ENCODE measurements at regions of chr11 and their contacts with region 1.

Region 1: GRCh38 chr11:94897330-94897768 is 76.0 kb downstream of the CWC15 start:
- DNase-seq: no peak
- H3K4me3 ChIP-seq: no peak overlapping the region
- H3K27ac ChIP-seq: no peak overlapping the region
- H3K4me1 ChIP-seq: no peaks in the 10 kb centered on the region
- H3K27me3 ChIP-seq: no peaks in the 10 kb centered on the region
- CTCF ChIP-seq: peak; percentile 69 to 89 (median 82)
- POLR2A ChIP-seq: no peak

Region 2: GRCh38 chr11:94623120-94623735 is 274.1 kb before region 1 on chr11:
- intact Hi-C with region 1: loop called (anchors 5 kb)
- DNase-seq: no peak
- H3K4me3 ChIP-seq: no peak overlapping the region
- H3K27ac ChIP-seq: no peak overlapping the region
- H3K4me1 ChIP-seq: no peaks in the 10 kb centered on the region
- H3K27me3 ChIP-seq: no peaks in the 10 kb centered on the region
- CTCF ChIP-seq: peak; percentile 80 to 86 (median 82)
- POLR2A ChIP-seq: no peak

Region 3: DNA sequence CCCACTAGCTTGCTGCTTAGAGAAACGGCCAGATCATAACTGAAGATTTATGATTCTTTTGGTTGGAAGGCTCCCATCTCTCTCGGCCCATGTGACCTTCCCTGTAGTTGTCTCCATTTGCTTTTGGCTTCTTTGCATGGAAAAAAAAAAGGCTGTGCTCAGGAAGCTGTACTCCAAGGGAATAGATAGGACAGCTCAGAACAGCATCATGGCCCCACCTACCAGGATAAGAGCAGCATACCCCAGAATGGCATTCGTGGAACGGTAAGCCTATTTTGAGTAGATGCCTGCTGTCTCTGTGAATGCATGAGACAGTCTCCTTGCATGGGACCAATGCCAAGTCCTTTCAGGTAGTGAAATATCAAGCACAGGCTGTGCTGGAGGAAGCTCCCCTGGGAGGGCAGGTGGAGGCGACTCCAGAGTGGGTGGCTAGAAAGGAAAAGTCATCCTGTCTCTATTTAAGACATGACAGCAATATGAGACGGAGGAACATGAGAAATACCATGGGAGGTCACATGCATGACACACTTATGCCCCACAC is 223.3 kb before region 1 on chr11:
- intact Hi-C with region 1: no loop called
- DNase-seq: peak in 1 of 2 donors; percentile 62
- H3K4me3 ChIP-seq: no peak overlapping the region
- H3K27ac ChIP-seq: no peak overlapping the region
- H3K4me1 ChIP-seq: no peaks in the 10 kb centered on the region
- H3K27me3 ChIP-seq: no peaks in the 10 kb centered on the region
- CTCF ChIP-seq: no peak
- POLR2A ChIP-seq: no peak

Region 4: DNA sequence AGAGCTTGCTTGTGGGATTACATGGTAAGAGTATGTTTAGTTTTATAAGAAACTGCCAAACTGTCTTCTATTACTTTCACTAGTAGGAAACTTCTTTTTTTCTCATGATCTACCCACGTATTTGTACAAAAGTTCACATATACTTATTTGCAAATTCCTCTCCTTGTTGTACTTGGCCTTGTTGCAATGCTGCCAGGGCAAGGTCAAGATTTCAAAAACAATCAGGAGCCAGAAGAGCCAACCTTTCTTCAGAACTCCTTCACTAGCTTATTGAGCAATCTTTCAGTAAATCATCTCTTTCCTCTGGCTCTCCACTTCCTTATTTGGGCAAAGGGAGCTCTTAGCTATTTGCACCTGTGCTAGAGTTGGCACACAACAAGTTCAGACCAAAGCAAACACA is 179.1 kb after region 1 on chr11:
- intact Hi-C with region 1: no loop called
- DNase-seq: no peak
- H3K4me3 ChIP-seq: no peak overlapping the region
- H3K27ac ChIP-seq: no peak overlapping the region
- H3K4me1 ChIP-seq: peaks cover 34% of the 10 kb centered on the region
- H3K27me3 ChIP-seq: no peaks in the 10 kb centered on the region
- CTCF ChIP-seq: no peak
- POLR2A ChIP-seq: no peak

Measured in vagina (tissue), 2 donors.